ENCODE measurements at regions of chr7 and their contacts with region 1.

Region 1: GRCh38 chr7:38222481-38223096 is 44.5 kb downstream of the STARD3NL start:
- DNase-seq: peak in 7 of 9 donors; percentile 34 to 68 (median 61)
- ATAC-seq: peak; percentile 80
- H3K4me3 ChIP-seq: no peak overlapping the region
- H3K4me3 Mint-ChIP-seq: peak overlapping the region in 1 of 10 donors; percentile 30
- H3K27ac ChIP-seq: no peak overlapping the region
- H3K27ac Mint-ChIP-seq: peak overlapping the region in 5 of 9 donors; percentile 0 to 39 (median 13)
- H3K4me1 ChIP-seq: peaks cover 0 to 70% of the 10 kb centered on the region in 2 donors
- H3K4me1 Mint-ChIP-seq: peaks cover 4 to 38% (median 7%) of the 10 kb centered on the region in 7 donors
- H3K27me3 ChIP-seq: no peaks in the 10 kb centered on the region
- H3K27me3 Mint-ChIP-seq: no peaks in the 10 kb centered on the region

Region 2: GRCh38 chr7:37916673-37917660 is 305.6 kb before region 1 on chr7 and contains the start of gene SFRP4:
- CTCF ChIA-PET with region 1: no interaction called
- POLR2A ChIA-PET with region 1: no interaction called
- intact Hi-C with region 1: loop called in 1 of 2 experiments (anchors 5 kb)
- DNase-seq: no peak
- ATAC-seq: peak; percentile 35
- H3K4me3 ChIP-seq: no peak within 1 kb of the TSS
- H3K4me3 Mint-ChIP-seq: peak within 1 kb of the TSS in 9 of 10 donors; percentile 9 to 73 (median 49)
- H3K27ac ChIP-seq: no peak within 1 kb of the TSS
- H3K27ac Mint-ChIP-seq: peak within 1 kb of the TSS in 1 of 9 donors; percentile 63
- H3K4me1 ChIP-seq: no peaks in the 10 kb centered on the region
- H3K4me1 Mint-ChIP-seq: peaks cover 5 to 32% (median 18%) of the 10 kb centered on the region in 7 donors
- H3K27me3 ChIP-seq: peaks cover 0 to 7% of the 10 kb centered on the region in 2 donors
- H3K27me3 Mint-ChIP-seq: peaks cover 63 to 81% (median 70%) of the 10 kb centered on the region in 5 donors
- total RNA-seq, gene SFRP4: not detected

Region 3: DNA sequence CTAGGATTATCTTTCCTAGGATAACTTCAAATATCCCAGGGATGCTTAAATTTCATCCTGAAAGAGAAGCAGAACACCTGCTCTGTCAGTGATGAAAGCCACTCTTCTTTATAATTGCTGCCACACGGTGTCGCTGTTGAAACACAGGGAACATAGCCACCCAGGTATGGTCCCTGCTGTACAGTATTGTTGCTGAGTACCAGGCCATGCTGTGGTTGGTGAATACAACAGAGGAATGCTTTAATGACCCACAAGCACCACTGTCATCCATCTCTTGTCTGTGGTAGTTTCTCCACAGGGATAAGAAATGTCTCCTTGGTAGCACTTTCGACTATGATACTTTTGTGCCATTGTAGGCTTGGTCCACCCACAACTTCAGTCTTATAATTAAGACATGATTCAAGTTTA is 115.1 kb before region 1 on chr7:
- CTCF ChIA-PET with region 1: interaction called, 64 read pairs
- POLR2A ChIA-PET with region 1: interaction called, 3 read pairs
- intact Hi-C with region 1: loop called (anchors 1 kb)
- DNase-seq: peak; percentile 16 to 58 (median 44)
- ATAC-seq: peak; percentile 88
- H3K4me3 ChIP-seq: no peak overlapping the region
- H3K4me3 Mint-ChIP-seq: no peak overlapping the region
- H3K27ac ChIP-seq: no peak overlapping the region
- H3K27ac Mint-ChIP-seq: no peak overlapping the region
- H3K4me1 ChIP-seq: no peaks in the 10 kb centered on the region
- H3K4me1 Mint-ChIP-seq: peaks cover 0 to 2% (median 0%) of the 10 kb centered on the region in 7 donors
- H3K27me3 ChIP-seq: no peaks in the 10 kb centered on the region
- H3K27me3 Mint-ChIP-seq: peaks cover 18 to 43% (median 23%) of the 10 kb centered on the region in 5 donors

Region 4: DNA sequence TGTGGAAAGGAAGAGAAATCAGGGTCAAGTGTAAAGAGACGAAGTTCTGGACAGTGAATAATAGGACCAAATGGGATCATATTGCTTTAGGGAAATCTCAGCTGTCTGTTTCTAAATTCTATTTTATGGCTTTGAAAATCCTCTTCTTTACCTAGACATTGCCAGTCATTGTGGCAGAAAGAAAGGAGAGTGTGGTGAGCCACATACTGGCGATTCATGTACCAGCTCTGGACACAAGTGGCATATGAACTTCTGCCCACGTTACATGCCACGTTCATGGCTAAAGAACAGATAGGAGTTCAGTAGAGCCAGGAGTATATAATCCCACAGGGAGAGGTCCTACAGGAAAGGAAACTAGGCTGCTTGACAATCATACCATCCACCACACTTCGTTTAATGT is 16.5 kb before region 1 on chr7:
- CTCF ChIA-PET with region 1: no interaction called
- POLR2A ChIA-PET with region 1: no interaction called
- intact Hi-C with region 1: no loop called
- DNase-seq: no peak
- ATAC-seq: no peak
- H3K4me3 ChIP-seq: no peak overlapping the region
- H3K4me3 Mint-ChIP-seq: no peak overlapping the region
- H3K27ac ChIP-seq: no peak overlapping the region
- H3K27ac Mint-ChIP-seq: peak overlapping the region in 1 of 9 donors; percentile 15
- H3K4me1 ChIP-seq: no peaks in the 10 kb centered on the region
- H3K4me1 Mint-ChIP-seq: peaks cover 0 to 4% (median 0%) of the 10 kb centered on the region in 7 donors
- H3K27me3 ChIP-seq: no peaks in the 10 kb centered on the region
- H3K27me3 Mint-ChIP-seq: no peaks in the 10 kb centered on the region

Region 5: DNA sequence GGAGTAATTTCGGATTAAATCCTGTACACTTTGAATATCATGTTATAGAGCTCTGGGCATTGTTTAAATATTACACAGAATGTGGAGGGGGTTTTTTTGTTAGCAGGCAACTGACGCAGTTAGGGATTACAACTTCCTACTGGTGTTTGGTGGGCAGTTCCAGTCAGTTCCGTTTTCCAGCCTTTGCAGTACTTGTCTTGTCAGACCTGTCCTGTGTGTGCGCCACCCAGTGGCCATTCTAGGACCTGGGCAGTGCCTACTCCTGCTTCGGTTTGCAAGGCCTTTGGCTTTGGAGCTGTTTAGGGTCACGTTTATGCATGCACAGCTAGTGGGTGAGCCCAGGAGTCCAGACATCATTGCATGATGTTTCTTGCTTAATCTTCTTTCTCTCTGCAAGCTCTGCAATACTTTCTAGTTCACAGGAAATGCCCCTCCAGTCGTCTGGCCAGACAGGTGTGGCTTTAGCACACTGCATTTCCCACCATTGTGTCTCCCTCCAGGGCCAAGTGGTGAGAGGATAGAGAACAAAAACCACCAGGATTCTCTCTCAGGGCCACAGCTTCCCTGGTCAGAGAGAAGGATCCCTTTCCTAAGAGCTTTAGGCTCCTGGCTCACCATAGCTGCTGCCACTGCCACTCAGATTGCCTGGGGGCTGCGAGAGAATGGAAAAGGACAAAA is 147.4 kb after region 1 on chr7:
- CTCF ChIA-PET with region 1: interaction called, 109 read pairs
- POLR2A ChIA-PET with region 1: interaction called, 5 read pairs
- intact Hi-C with region 1: no loop called
- DNase-seq: peak; percentile 39 to 79 (median 63)
- ATAC-seq: peak; percentile 89
- H3K4me3 ChIP-seq: no peak overlapping the region
- H3K4me3 Mint-ChIP-seq: peak overlapping the region; percentile 9 to 64 (median 56)
- H3K27ac ChIP-seq: peak overlapping the region; percentile 64
- H3K27ac Mint-ChIP-seq: peak overlapping the region in 8 of 9 donors; percentile 85 to 97 (median 92)
- H3K4me1 ChIP-seq: peaks cover 47% of the 10 kb centered on the region in 2 donors
- H3K4me1 Mint-ChIP-seq: peaks cover 33 to 79% (median 69%) of the 10 kb centered on the region in 7 donors
- H3K27me3 ChIP-seq: no peaks in the 10 kb centered on the region
- H3K27me3 Mint-ChIP-seq: no peaks in the 10 kb centered on the region

Measured in naive thymus-derived CD4-positive, alpha-beta T cell (primary cell).